ENCODE measurements at regions of chr1 and their contacts with region 1.

Region 1: GRCh38 chr1:11749203-11749689 is 12.7 kb upstream of the C1orf167 start:
- DNase-seq: peak; percentile 59 to 79
- ATAC-seq: peak; percentile 89 to 96
- H3K4me3 ChIP-seq: no peak overlapping the region
- H3K27ac ChIP-seq: peak overlapping the region in 1 of 2 experiments; percentile 60; a peak in 2 of 6 replicates
- H3K4me1 ChIP-seq: no peaks in the 10 kb centered on the region; the same call in 2 of the 3 replicates
- CTCF ChIP-seq: peak; percentile 44
- EP300 ChIP-seq: no peak
- POLR2A ChIP-seq: no peak
- RAD21 ChIP-seq: peak; percentile 56 to 69; a peak in 4 of 5 replicates

Region 2: GRCh38 chr1:11735854-11736745 is 13.1 kb before region 1 on chr1 and contains the start of gene AGTRAP:
- CTCF ChIA-PET with region 1: interaction called, 10 read pairs
- POLR2A ChIA-PET with region 1: interaction called, 3 read pairs
- DNase-seq: peak; percentile 81 to 90
- ATAC-seq: peak; percentile 84 to 92
- H3K4me3 ChIP-seq: peak within 1 kb of the TSS; percentile 68
- H3K27ac ChIP-seq: peak within 1 kb of the TSS; percentile 90 to 98
- H3K4me1 ChIP-seq: peaks cover 14% of the 10 kb centered on the region
- CTCF ChIP-seq: no peak
- EP300 ChIP-seq: no peak
- POLR2A ChIP-seq: peak; percentile 22
- RAD21 ChIP-seq: no peak
- polyA plus RNA-seq, gene AGTRAP: 26.9 and 32.1 TPM in 2 replicates

Region 3: GRCh38 chr1:12087797-12088314 is 338.6 kb after region 1 on chr1:
- CTCF ChIA-PET with region 1: no interaction called
- POLR2A ChIA-PET with region 1: no interaction called
- DNase-seq: no peak
- ATAC-seq: no peak
- H3K4me3 ChIP-seq: no peak overlapping the region
- H3K27ac ChIP-seq: no peak overlapping the region
- H3K4me1 ChIP-seq: no peaks in the 10 kb centered on the region
- CTCF ChIP-seq: no peak
- EP300 ChIP-seq: no peak
- POLR2A ChIP-seq: no peak
- RAD21 ChIP-seq: no peak

Measured in A549 (cell line).